Mucosa of descending colon (tissue), 3 donors: ENCODE measurements at regions of chr15 and their contacts with region 1.

Region 1: GRCh38 chr15:92881802-92882696 is 18.1 kb upstream of the CHD2 start:
- DNase-seq: peak; percentile 98 to 99 (median 99)
- ATAC-seq: peak; percentile 92
- H3K4me3 ChIP-seq: no peak overlapping the region
- H3K4me1 ChIP-seq: peaks cover 31% of the 10 kb centered on the region
- CTCF ChIP-seq: no peak

Region 2: DNA sequence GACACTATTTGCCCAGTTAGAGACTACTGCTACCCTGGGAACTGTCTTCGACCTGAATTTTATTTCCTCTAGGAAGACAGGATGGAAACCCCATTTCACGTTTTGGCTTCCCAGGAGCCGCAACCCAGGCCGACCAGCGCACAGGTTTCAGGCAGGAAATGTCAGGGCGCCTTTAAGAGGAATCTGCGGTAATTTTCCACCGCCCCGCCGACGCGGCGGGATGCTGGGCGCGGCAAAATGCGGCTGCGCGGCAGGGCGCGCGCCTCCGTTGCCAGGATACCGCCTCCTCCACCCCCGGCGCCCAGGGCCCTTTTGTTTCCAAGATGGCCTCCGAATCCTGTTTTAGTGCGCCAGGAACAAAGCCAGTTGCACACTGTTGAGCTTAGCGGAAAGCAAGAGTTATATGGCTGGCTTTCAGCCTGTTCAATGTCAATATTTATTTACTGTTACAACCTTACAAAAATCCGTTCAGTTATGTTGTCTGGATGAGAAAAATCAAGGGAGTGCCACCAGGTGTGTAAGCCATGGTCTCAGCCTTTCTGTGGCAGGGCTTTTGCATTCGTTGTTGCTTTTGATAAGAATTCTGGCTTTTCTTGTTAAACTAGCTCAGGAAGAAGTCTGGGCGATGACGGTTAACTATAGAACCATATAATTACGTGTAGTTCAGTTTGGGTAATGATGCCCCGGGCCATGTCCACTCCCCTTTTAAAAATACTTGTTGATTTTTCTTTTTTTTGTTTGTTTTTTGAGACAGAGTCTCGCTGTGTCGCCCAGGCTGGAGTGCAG is 61.6 kb before region 1 on chr15:
- intact Hi-C with region 1: loop called in 1 of 2 experiments (anchors 5 kb)
- DNase-seq: peak; percentile 93 to 95 (median 95)
- ATAC-seq: peak; percentile 91
- H3K4me3 ChIP-seq: peak overlapping the region; percentile 1
- H3K4me1 ChIP-seq: peaks cover 29% of the 10 kb centered on the region
- CTCF ChIP-seq: no peak